Heart right ventricle (tissue), 16 donors: ENCODE measurements at regions of chr4 and their contacts with region 1.

Region 1: DNA sequence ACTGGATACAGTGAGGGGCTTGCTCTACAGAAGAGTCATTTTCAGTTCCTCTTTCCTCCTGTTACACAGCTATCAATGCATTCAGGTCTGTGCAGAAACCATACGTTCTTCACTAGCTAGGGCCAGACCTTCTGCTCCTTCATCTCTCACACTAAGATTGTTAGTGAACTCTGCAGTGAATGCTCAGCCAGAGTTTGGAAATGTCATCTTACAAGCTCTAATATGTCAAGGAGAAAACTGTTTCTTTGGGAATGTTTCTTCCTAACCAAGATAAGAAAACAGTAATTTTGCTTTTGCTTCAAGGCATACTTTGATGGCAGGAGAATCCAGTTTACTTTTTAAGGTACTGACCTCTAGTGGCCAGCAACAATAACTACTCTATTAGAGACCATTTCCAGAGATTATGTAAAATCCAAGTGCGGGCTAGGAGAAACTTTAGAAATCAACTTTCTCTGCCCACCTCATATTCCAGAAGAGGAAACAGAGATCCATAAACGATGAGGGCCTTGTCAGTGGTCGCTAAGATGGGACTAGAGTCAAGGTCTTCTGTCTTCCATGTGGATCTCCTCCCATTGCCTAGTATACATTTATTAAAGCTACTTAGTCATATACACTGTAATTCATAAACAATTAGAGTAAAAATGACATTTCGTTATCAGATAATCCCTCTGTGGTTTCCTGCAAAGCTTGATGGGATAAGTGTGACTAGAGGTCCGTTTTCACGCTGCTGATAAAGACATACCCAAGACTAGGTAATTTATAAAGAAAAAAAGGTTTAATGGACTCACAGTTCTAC is 12.1 kb upstream of the CC2D2A start:
- DNase-seq: no peak
- ATAC-seq: peak in 7 of 8 donors; percentile 46 to 87 (median 76)
- H3K4me3 ChIP-seq: no peak overlapping the region
- H3K27ac ChIP-seq: peak overlapping the region in 5 of 10 donors; percentile 13 to 43 (median 19)
- H3K4me1 ChIP-seq: peaks cover 0 to 24% (median 11%) of the 10 kb centered on the region in 9 donors
- H3K27me3 ChIP-seq: no peaks in the 10 kb centered on the region
- CTCF ChIP-seq: peak; percentile 42 to 89 (median 75)

Region 2: GRCh38 chr4:15231265-15232091 is 226.1 kb before region 1 on chr4:
- intact Hi-C with region 1: loop called in 8 of 10 experiments (anchors 1 to 5 kb)
- DNase-seq: peak; percentile 44 to 86
- ATAC-seq: peak; percentile 81 to 87 (median 82)
- H3K4me3 ChIP-seq: no peak overlapping the region
- H3K27ac ChIP-seq: peak overlapping the region in 2 of 10 donors; percentile 17 to 50
- H3K4me1 ChIP-seq: peaks cover 3 to 37% (median 27%) of the 10 kb centered on the region in 9 donors
- H3K27me3 ChIP-seq: no peaks in the 10 kb centered on the region
- CTCF ChIP-seq: peak; percentile 65 to 83 (median 71)

Region 3: DNA sequence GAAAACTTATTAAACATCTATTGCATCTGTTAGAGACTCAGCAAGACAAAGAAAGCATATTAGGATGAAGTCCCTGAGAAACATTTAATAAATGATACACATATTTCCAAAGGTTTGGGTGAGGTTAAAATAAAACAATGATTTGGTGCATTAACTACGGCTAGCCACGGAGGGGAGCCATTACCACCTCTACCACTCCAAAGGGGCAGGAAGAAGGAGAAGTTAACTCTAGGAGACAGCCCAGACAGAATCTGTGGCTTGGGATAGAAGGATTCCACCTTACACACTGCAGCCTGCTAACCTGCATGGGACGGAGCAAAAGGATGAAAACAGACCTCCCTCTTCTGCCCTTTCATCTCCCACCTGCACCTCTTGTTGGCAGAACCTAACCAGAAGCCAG is 218.9 kb before region 1 on chr4:
- intact Hi-C with region 1: loop called in 8 of 10 experiments (anchors 1 to 5 kb)
- DNase-seq: peak in 1 of 2 donors; percentile 20
- ATAC-seq: peak in 7 of 8 donors; percentile 52 to 77 (median 68)
- H3K4me3 ChIP-seq: no peak overlapping the region
- H3K27ac ChIP-seq: no peak overlapping the region
- H3K4me1 ChIP-seq: peaks cover 0 to 34% (median 10%) of the 10 kb centered on the region in 9 donors
- H3K27me3 ChIP-seq: no peaks in the 10 kb centered on the region
- CTCF ChIP-seq: peak; percentile 22 to 67 (median 61)

Region 4: GRCh38 chr4:15410750-15411149 is 46.9 kb before region 1 on chr4:
- intact Hi-C with region 1: loop called in 2 of 10 experiments (anchors 5 kb)
- DNase-seq: no peak
- ATAC-seq: no peak
- H3K4me3 ChIP-seq: no peak overlapping the region
- H3K27ac ChIP-seq: peak overlapping the region in 2 of 10 donors; percentile 27 to 64
- H3K4me1 ChIP-seq: peaks cover 0 to 41% (median 18%) of the 10 kb centered on the region in 9 donors
- H3K27me3 ChIP-seq: no peaks in the 10 kb centered on the region
- CTCF ChIP-seq: no peak

Region 5: GRCh38 chr4:16329125-16329796 is 871.7 kb after region 1 on chr4:
- intact Hi-C with region 1: no loop called
- DNase-seq: no peak
- ATAC-seq: no peak
- H3K4me3 ChIP-seq: no peak overlapping the region
- H3K27ac ChIP-seq: no peak overlapping the region
- H3K4me1 ChIP-seq: no peaks in the 10 kb centered on the region
- H3K27me3 ChIP-seq: no peaks in the 10 kb centered on the region
- CTCF ChIP-seq: no peak